MCF 10A (cell line): ENCODE measurements at regions of chr1 and their contacts with region 1.

Region 1: DNA sequence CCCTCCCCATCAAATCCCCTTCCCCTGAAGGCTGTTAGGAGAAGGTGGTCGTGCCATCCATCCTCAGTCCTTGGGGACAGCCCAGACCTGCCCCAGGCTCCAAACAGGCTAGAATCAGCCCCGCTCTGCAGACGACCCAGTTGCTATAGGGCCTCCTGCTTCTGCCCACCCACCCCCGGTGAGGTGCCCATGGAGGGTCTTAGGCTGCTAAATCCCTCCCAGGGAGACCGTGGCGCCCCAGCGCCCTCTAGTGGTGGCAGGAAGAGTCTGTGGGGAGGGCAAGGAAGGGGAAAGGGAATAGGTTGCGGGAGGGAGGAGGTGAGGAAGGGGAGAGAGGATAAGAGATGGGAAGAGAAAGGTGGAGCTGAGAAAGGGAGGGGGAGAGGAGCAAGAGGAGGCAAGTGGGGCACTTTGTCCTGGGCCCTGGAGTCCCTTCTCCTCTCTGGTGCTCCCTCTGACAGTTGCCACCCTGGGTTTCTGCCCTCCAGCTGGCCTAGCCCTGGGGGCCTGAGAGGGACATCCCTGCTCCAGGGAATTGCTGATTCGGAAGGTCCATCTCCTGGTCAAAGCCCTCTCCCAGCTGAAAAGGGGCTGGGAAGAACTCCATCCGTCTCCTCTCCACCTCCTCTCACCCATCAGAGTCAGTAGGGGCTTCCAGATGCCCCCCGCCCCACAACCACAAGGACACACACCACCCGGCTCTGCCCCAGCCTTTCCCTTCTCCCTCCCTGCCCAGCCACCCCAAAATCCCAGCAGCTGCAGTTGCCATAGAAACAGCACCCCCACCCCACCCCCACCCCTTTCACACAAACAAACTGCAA is 55.4 kb downstream of the CAMK2N1 start:
- DNase-seq: peak; percentile 43
- H3K4me3 Mint-ChIP-seq: no peak overlapping the region
- H3K27ac Mint-ChIP-seq: no peak overlapping the region
- H3K4me1 Mint-ChIP-seq: peaks cover 7% of the 10 kb centered on the region
- H3K27me3 Mint-ChIP-seq: peaks cover 2% of the 10 kb centered on the region
- CTCF ChIP-seq: peak; percentile 85

Region 2: DNA sequence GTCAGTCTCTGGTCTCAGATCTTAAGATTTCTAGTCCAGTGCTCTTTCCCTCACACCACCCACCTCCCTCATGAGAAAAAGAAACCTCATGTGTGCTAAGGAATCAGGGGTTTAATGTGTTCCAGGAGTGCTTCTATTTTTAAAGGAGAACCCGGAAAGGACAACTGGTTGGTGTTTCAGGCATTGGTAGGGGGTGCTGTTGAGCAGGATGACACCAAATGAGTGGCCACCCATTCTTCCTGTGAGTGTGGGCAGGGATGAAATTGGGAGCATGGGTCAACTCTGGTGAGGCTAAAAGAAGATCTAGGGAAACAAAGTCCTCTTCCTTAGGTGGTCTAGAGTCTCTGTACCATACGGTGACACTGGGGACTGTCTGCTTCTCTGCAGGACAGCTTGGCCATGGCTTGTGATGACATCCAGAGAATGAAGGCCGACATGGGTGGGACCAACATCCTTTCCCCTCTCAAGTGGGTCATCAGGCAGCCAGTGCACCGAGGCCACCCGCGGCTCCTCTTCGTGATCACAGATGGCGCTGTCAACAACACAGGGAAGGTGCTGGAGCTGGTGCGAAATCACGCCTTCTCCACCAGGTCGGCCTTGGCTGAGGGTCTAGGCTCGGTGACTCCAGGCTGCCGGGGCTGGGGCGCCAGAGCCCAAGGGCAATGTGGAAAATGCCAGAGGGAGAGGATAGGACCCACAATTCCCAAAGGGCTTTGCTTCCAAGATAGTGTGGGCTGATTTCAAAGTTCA is 100.6 kb before region 1 on chr1:
- CTCF ChIA-PET with region 1: no interaction called
- POLR2A ChIA-PET with region 1: no interaction called
- intact Hi-C with region 1: no loop called
- DNase-seq: peak; percentile 23
- H3K4me3 Mint-ChIP-seq: no peak overlapping the region
- H3K27ac Mint-ChIP-seq: no peak overlapping the region
- H3K4me1 Mint-ChIP-seq: no peaks in the 10 kb centered on the region
- H3K27me3 Mint-ChIP-seq: peaks cover 32% of the 10 kb centered on the region
- CTCF ChIP-seq: no peak

Region 3: DNA sequence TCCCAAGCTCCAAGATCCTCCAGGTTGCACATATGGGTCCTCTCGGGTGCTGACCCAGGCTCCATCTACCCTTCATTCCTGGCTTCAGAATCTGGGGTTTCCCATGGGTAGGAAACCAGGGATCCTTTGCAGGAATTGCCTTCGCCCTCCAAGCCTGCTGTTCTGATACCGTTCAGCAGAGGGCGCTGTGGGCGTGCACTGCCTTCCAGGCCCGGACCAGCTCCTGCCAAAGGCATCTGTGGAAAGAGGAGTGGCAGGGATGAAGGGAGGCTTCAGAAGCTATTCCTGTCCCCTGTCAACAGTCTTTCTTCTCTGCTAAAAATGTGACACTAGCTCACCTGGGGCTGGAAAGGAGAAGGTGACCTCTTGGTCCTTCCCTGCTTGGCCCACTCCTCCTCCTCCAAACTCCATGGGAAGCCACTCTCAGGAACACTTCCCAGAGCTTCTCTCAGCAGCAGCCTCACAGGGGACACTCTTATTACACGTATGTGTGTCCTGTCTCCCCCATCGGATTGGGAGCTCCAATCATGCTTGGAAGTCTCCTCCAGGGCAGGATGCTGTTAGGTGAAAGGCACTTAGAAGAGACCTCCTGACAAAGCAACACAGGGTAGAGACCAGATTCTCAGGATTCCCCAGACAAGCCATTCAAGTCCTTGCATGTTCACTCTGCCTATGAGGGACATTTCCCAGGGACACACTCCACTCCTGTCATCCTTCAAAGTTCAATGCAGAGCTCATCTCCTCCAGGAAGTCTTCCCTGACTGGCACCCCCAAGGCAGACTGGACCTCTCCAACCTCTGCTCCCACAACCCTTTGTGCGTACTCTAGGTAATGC is 68.5 kb before region 1 on chr1:
- CTCF ChIA-PET with region 1: interaction called, 3 read pairs
- POLR2A ChIA-PET with region 1: no interaction called
- intact Hi-C with region 1: loop called (anchors 1 kb)
- DNase-seq: peak; percentile 62
- H3K4me3 Mint-ChIP-seq: no peak overlapping the region
- H3K27ac Mint-ChIP-seq: no peak overlapping the region
- H3K4me1 Mint-ChIP-seq: peaks cover 13% of the 10 kb centered on the region
- H3K27me3 Mint-ChIP-seq: peaks cover 22% of the 10 kb centered on the region
- CTCF ChIP-seq: peak; percentile 85

Region 4: GRCh38 chr1:20376880-20377494 is 53.6 kb before region 1 on chr1:
- CTCF ChIA-PET with region 1: interaction called, 4 read pairs
- POLR2A ChIA-PET with region 1: no interaction called
- intact Hi-C with region 1: loop called (anchors 1 kb)
- DNase-seq: peak; percentile 48
- H3K4me3 Mint-ChIP-seq: no peak overlapping the region
- H3K27ac Mint-ChIP-seq: no peak overlapping the region
- H3K4me1 Mint-ChIP-seq: peaks cover 18% of the 10 kb centered on the region
- H3K27me3 Mint-ChIP-seq: no peaks in the 10 kb centered on the region
- CTCF ChIP-seq: peak; percentile 50

Region 5: DNA sequence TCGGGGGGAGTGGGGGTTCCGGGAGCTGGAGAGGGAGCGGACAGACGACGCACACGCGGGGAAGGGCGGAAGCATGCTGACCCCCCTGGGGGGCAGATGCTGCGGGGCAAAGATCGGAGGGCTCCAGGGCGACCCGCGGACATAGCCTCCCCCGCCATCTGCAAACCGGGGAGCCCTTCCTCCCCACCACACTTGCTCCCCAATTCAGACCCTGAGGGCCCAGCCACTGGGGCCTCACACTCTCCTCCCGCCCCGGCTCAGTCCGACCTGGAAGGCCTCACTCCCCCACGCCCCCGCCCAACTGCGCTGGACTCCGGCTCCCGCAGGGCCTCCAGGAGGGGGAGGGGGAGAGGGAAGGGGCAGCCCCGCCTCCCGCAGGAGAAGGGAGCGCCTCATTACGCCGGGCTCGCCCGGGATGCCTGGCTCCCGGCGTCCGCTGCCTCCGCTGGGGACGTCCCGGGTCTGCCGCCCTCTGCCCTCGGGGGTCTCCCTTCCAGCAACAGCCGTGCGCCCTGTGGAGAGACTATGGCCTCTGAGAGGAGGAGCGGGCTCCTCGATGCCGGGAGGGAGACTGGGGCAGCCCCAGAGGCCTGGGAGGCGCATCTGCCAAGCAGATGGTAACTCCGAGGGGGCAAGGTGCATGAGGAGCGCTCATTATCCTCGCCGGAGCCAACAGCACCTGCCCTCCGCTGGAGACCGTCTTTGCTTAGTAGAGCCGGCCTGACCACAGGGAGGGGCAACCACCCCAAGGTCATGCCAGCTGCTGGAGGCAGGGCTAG is 56.1 kb after region 1 on chr1:
- CTCF ChIA-PET with region 1: no interaction called
- POLR2A ChIA-PET with region 1: no interaction called
- intact Hi-C with region 1: no loop called
- DNase-seq: peak; percentile 40
- H3K4me3 Mint-ChIP-seq: peak overlapping the region; percentile 76
- H3K27ac Mint-ChIP-seq: no peak overlapping the region
- H3K4me1 Mint-ChIP-seq: peaks cover 21% of the 10 kb centered on the region
- H3K27me3 Mint-ChIP-seq: no peaks in the 10 kb centered on the region
- CTCF ChIP-seq: no peak